GM12878 (cell line): ENCODE measurements at regions of chr9 and their contacts with region 1.

Region 1: DNA sequence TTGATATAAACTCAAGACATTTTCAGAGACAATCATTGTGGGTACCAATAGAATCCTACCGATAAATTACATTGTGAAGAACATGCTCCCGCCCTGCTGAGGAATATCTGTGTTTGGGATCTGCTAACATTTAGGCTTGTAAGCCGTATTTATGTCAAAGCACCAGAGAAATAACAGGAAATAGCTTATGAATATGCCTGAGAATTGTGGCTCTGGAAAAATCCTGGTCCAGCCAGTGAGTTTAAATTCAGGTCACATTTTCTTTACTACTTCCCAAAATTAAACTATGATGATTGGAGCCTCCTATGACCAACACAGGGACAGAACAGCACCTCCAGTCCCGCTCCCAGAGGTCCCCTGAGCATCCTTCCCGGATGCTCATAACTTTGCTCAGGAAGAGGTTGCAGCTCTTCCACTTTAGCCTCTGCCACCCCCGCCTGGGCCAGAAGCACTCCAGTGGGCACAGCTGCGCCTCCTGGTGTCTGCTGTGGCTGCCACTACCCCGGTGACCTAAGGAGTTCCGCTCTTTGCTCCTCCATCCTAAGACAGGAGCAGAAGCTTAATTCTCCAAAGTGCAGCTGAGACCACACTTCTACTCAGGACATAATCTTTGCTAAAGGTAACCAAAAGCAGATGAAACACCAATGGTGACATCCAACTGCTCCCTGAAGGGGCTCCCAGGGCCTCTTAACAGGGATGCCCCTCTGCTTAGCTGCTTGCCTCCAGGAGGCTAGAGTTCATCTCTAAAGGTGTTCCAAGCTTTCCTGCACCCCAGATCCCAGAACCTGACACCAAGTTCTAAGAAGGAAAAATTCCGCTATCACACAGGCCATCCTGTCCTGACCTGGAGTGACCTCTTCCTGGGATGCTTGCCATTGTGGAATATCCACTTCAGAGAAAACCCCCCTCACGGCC is 58.8 kb downstream of the SLC1A1 start:
- DNase-seq: no peak
- ATAC-seq: peak; percentile 97
- H3K4me3 ChIP-seq: no peak overlapping the region
- H3K27ac ChIP-seq: no peak overlapping the region
- H3K4me1 ChIP-seq: no peaks in the 10 kb centered on the region
- H3K27me3 ChIP-seq: no peaks in the 10 kb centered on the region
- CTCF ChIP-seq: peak; percentile 68 to 75 (median 68)
- EP300 ChIP-seq: no peak
- POLR2A ChIP-seq: no peak
- RAD21 ChIP-seq: peak; percentile 73

Region 2: DNA sequence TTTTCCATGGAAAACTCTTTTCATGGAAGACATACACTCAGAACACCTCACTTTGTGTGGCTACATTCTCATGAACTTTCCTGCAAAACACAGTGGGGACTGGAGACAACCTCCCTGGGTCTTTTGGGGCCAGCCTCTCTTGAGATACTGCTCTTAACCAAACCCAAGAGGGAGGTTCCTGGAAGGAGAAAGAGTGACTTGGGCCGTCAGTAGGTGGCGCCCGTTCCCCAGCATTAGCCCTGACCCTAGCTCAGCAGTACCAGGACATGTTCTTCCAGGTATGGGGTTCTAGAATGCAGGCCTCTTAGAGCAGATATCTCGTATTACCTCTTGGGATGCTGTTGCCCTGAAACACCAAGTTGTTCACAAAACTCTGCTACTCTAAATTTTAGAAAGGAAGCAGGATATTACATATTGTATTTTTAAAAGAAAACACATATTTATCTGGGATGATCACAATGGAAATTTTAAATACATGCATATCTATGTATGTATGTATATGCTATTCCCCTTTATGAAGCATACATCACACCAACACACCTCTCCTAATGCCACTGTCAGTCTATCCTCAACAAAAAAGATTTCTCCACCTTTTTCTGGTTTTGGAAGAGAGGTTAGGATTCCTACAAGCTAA is 233.4 kb before region 1 on chr9:
- CTCF ChIA-PET with region 1: interaction called, 15 read pairs
- POLR2A ChIA-PET with region 1: no interaction called
- RAD21 ChIA-PET with region 1: interaction called, 4 read pairs
- SMC1A ChIA-PET with region 1: interaction called, 3 read pairs
- in situ Hi-C with region 1: no loop called
- intact Hi-C with region 1: no loop called
- DNase-seq: peak; percentile 32
- ATAC-seq: peak; percentile 100
- H3K4me3 ChIP-seq: no peak overlapping the region
- H3K27ac ChIP-seq: no peak overlapping the region
- H3K4me1 ChIP-seq: no peaks in the 10 kb centered on the region
- H3K27me3 ChIP-seq: no peaks in the 10 kb centered on the region; a peak in 1 of 4 replicates
- CTCF ChIP-seq: peak; percentile 81 to 92 (median 91)
- EP300 ChIP-seq: no peak
- POLR2A ChIP-seq: no peak
- RAD21 ChIP-seq: peak; percentile 91

Region 3: GRCh38 chr9:4382722-4383317 is 166.2 kb before region 1 on chr9:
- CTCF ChIA-PET with region 1: interaction called, 111 read pairs
- POLR2A ChIA-PET with region 1: no interaction called
- RAD21 ChIA-PET with region 1: interaction called, 28 read pairs
- SMC1A ChIA-PET with region 1: interaction called, 63 read pairs
- in situ Hi-C with region 1: loop called (anchors 10 kb)
- intact Hi-C with region 1: loop called (anchors 1 kb)
- DNase-seq: peak; percentile 40
- ATAC-seq: peak; percentile 87
- H3K4me3 ChIP-seq: no peak overlapping the region
- H3K27ac ChIP-seq: no peak overlapping the region
- H3K4me1 ChIP-seq: peaks cover 5% of the 10 kb centered on the region; the same call in 1 of the 2 replicates
- H3K27me3 ChIP-seq: no peaks in the 10 kb centered on the region
- CTCF ChIP-seq: peak; percentile 51 to 73 (median 58); a peak in 5 of 6 replicates
- EP300 ChIP-seq: no peak
- POLR2A ChIP-seq: no peak
- RAD21 ChIP-seq: peak; percentile 87

Region 4: GRCh38 chr9:4464911-4465513 is 84.1 kb before region 1 on chr9:
- CTCF ChIA-PET with region 1: interaction called, 3 read pairs
- POLR2A ChIA-PET with region 1: no interaction called
- RAD21 ChIA-PET with region 1: interaction called, 3 read pairs
- SMC1A ChIA-PET with region 1: interaction called, 15 read pairs
- in situ Hi-C with region 1: no loop called
- intact Hi-C with region 1: no loop called
- DNase-seq: peak; percentile 96
- ATAC-seq: peak; percentile 97
- H3K4me3 ChIP-seq: peak overlapping the region; percentile 25; the same call in 1 of the 2 replicates
- H3K27ac ChIP-seq: peak overlapping the region; percentile 98
- H3K4me1 ChIP-seq: peaks cover 21% of the 10 kb centered on the region; the same call in 1 of the 2 replicates
- H3K27me3 ChIP-seq: no peaks in the 10 kb centered on the region
- CTCF ChIP-seq: no peak
- EP300 ChIP-seq: peak; percentile 95 to 98
- POLR2A ChIP-seq: no peak
- RAD21 ChIP-seq: no peak

Region 5: GRCh38 chr9:4538621-4539020 is 10.4 kb before region 1 on chr9:
- CTCF ChIA-PET with region 1: interaction called, 8 read pairs
- POLR2A ChIA-PET with region 1: no interaction called
- RAD21 ChIA-PET with region 1: no interaction called
- SMC1A ChIA-PET with region 1: interaction called, 18 read pairs
- in situ Hi-C with region 1: no loop called
- intact Hi-C with region 1: no loop called
- DNase-seq: no peak
- ATAC-seq: no peak
- H3K4me3 ChIP-seq: no peak overlapping the region
- H3K27ac ChIP-seq: no peak overlapping the region
- H3K4me1 ChIP-seq: no peaks in the 10 kb centered on the region
- H3K27me3 ChIP-seq: no peaks in the 10 kb centered on the region
- CTCF ChIP-seq: no peak
- EP300 ChIP-seq: no peak
- POLR2A ChIP-seq: no peak
- RAD21 ChIP-seq: no peak